ENCODE measurements at regions of chr12 and their contacts with region 1.

Region 1: DNA sequence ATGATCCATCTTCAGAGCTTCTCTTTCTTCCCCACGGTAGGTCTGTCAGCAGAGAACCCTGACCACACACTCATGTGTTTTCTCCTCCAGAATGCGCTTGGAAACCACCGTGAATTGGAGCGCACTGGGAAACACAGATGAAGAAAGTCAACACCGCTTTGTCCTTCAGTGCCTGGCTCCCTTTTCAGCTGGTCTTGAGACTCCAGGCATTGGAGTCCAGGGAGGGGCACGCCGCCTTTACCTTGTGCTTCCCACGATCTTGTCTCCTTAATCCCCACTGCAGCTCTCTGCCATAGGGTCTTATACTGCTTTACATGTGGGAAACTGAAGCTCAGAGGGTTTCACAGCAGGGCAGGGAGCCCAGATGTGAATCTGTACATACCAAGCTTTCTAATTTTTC is 1.1 kb downstream of the FAM90A1 start:
- DNase-seq: no peak
- H3K4me3 ChIP-seq: no peak overlapping the region
- H3K27ac ChIP-seq: no peak overlapping the region
- H3K4me1 ChIP-seq: peaks cover 0 to 13% (median 3%) of the 10 kb centered on the region in 4 donors
- H3K27me3 ChIP-seq: no peaks in the 10 kb centered on the region
- CTCF ChIP-seq: no peak

Region 2: DNA sequence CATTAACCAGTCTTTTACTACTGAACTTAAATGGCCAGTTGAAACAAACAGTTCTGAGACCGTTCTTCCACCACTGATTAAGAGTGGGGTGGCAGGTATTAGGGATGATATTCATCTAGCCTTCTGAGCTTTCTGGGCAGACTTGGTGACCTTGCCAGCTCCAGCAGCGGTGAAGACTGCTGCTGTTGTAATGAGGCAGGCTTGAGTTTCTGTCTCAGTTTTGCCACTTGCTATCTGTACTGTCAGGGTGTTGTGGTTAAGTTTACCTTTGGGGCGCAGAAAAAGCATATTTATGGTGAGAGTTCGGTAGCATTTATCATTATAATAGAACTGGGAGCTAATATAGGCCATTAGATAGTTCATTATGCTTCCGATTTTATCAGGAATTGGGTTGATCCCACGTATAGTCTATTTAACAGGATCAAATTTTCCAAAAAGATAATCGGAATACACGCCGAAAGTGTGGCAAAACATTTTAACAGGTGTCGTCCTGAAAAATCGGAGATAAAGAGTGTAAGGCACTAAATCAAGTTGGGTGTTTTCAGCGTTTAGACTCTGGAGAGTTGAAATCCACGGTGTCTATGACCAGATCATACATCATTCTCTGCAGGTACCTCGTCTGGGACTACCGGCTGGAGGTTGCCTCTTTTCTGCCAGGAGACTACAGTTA is 145.0 kb before region 1 on chr12:
- intact Hi-C with region 1: loop called (anchors 10 kb)
- DNase-seq: no peak
- H3K4me3 ChIP-seq: peak overlapping the region; percentile 64 to 87
- H3K27ac ChIP-seq: peak overlapping the region; percentile 87 to 97
- H3K4me1 ChIP-seq: peaks cover 0 to 31% (median 10%) of the 10 kb centered on the region in 4 donors
- H3K27me3 ChIP-seq: no peaks in the 10 kb centered on the region
- CTCF ChIP-seq: no peak

Region 3: GRCh38 chr12:8108808-8109398 is 117.5 kb before region 1 on chr12:
- intact Hi-C with region 1: loop called (anchors 10 kb)
- DNase-seq: peak; percentile 80 to 82
- H3K4me3 ChIP-seq: no peak overlapping the region
- H3K27ac ChIP-seq: no peak overlapping the region
- H3K4me1 ChIP-seq: no peaks in the 10 kb centered on the region
- H3K27me3 ChIP-seq: no peaks in the 10 kb centered on the region
- CTCF ChIP-seq: peak; percentile 97

Region 4: DNA sequence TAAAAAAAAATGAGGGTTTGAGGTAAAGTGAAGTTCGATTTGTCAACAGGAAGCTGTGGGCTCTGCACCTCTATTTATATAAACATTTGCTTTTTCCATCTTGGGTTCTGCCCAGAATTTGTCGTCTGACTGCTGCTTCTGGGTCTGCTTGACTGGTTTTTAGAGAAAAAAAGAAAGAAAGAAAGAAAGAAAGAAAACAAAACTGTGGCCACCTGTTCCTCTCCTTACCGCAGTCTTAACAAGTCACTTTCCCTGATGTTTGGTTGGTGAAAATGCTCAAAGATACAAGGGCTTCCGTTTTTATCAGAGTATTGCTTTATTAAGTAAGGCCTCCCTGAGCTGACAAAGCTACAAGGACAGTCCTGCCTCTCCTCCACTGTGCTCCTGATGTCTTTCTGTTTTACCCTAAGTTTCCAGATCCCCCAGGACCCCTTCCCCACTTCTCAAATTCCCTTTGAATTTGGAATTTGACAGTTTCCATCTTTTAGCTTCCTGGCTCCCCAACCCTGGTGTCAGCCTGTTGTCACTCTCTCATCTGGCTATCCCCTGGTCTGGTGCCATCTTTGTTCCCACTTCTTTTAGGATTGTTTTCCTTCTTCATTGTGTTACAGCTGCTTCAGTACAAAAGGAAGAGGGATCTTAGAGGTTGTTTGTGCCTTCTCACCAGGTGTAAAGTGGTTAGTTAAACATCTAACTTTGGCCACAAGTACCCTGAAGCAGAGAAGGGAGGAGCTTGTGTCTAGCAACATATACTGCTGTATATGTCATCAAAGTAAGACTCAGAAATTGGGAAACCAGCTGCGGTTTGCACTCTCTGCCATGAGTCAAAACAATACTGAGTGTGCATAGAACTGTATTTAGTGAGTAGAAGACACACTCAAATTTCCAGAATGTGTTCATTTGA is 418.2 kb after region 1 on chr12:
- intact Hi-C with region 1: no loop called
- DNase-seq: no peak
- H3K4me3 ChIP-seq: no peak overlapping the region
- H3K27ac ChIP-seq: no peak overlapping the region
- H3K4me1 ChIP-seq: no peaks in the 10 kb centered on the region
- H3K27me3 ChIP-seq: no peaks in the 10 kb centered on the region
- CTCF ChIP-seq: no peak

Region 5: DNA sequence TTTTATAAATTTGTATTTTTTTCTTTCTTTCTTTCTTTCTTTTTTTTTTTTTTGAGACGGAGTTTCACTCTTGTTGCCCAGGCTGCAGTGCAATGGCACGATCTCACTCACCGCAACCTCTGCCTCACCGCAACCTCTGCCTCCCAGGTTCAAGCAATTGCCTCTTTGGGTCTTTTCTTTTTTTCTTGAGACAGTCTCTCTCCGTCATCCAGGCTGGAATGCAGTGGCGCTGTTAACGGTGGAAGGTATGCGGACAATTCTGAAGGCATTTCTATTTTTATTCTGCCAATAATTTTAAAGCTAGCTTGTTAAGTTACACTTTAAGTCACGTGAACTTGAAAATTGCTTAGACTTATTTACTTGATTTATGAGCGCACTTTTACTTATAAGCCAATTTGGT is 679.2 kb after region 1 on chr12:
- intact Hi-C with region 1: no loop called
- DNase-seq: no peak
- H3K4me3 ChIP-seq: peak overlapping the region in 1 of 2 donors; percentile 18
- H3K27ac ChIP-seq: no peak overlapping the region
- H3K4me1 ChIP-seq: no peaks in the 10 kb centered on the region
- H3K27me3 ChIP-seq: no peaks in the 10 kb centered on the region
- CTCF ChIP-seq: no peak